Caco-2 (cell line): ENCODE measurements at regions of chr11 and their contacts with region 1.

Region 1: DNA sequence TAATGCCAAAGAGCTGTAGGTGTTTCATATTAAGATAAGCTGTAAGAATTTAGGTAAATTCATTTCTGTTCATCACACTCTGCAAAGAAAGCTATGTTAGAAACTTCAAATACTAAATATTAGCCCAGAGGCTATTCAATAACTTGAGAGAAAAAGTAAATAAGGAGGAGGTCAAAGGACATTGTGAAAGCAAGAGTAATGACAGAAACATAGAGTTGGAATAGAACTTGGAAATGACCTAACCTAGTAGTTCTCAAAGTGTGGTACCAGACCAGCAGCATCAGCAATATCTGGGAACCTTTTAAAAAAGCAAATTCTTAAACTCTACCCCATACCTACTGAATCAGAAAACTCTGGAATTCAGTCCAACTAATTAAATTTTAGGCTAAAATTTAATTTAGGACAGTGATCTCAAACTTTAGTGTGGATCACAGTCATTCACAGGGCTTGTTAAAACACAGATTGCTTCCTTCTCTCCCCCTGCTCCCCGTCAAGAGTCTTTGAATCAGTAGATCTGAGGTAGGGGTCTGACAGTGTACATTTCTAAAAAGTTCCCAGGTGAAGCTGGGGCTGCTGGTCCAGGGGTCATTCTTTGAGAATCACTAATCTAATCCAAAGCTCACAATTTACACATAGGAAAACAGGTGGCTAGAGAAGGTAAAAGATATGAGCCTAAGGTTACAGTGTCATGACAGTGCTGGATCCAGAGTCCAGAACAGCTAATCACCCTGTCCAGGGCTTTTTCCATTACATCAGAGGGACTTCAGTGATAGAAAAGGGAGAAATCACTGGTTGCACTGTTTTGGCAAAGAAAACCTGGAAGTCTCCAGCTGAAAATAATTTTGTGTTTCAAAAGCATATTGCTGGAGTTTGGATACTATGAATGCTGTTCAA is 241.1 kb downstream of the SOX6 start:
- DNase-seq: peak; percentile 51 to 55
- H3K4me3 ChIP-seq: no peak overlapping the region
- H3K4me3 Mint-ChIP-seq: peak overlapping the region; percentile 58
- H3K27ac Mint-ChIP-seq: peak overlapping the region; percentile 85
- H3K4me1 ChIP-seq: peaks cover 55% of the 10 kb centered on the region
- H3K4me1 Mint-ChIP-seq: peaks cover 47% of the 10 kb centered on the region
- H3K27me3 ChIP-seq: no peaks in the 10 kb centered on the region
- H3K27me3 Mint-ChIP-seq: no peaks in the 10 kb centered on the region
- CTCF ChIP-seq: no peak

Region 2: DNA sequence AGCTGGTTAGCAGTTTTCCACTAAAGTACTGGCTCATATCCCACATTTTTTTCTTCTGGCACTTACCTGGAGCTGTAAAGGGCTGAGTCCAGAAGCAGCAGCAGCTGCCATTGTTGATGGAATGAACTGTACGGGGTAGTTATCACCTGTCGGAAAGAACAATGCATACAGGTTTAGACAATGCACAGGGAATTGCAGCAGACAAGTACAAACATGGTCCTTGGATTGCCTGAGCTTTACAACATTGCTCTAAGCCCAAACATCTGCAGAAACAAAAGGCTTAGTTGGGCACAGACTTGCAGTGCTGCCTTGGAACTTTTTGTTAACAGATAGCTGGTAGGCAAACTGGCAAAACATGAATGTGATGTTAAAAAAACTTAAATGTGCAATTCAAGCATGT is 17.7 kb before region 1 on chr11:
- CTCF ChIA-PET with region 1: interaction called, 3 read pairs
- POLR2A ChIA-PET with region 1: no interaction called
- intact Hi-C with region 1: loop called (anchors 2 kb)
- DNase-seq: peak; percentile 60 to 64
- H3K4me3 ChIP-seq: no peak overlapping the region
- H3K4me3 Mint-ChIP-seq: no peak overlapping the region
- H3K27ac Mint-ChIP-seq: peak overlapping the region; percentile 64
- H3K4me1 ChIP-seq: peaks cover 43% of the 10 kb centered on the region
- H3K4me1 Mint-ChIP-seq: peaks cover 40% of the 10 kb centered on the region
- H3K27me3 ChIP-seq: no peaks in the 10 kb centered on the region
- H3K27me3 Mint-ChIP-seq: no peaks in the 10 kb centered on the region
- CTCF ChIP-seq: no peak

Region 3: DNA sequence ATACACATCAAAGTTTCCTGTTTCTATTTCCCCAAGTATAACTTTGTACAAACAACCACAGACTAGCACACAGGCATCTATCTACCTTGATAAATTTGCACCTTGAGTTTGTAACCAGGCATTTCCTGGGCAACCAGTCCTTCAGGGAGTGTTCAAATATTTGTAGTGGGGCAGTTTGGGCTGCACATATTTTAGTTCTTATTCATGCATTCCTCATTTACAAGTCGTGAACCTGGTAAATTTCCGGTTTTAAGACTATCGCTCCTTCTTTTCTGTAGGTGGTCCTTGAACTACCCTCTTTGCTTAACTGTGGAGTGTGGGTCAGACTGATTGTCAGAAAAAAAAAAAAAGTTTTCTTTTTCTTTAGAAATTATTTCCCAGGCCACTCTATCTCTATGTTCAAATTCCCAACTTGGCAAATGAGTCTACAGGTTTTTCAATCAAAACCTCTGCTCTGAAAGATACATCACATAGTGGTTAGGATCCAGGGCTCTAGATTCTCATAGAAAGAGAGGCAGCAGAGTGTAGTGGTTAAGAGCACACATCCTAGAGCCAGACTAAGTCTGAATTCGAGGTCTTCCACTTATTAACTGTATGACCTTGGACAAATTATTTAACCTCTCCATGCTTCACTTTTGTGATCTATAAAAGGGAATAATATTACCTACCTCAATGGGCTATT is 39.6 kb after region 1 on chr11:
- CTCF ChIA-PET with region 1: no interaction called
- POLR2A ChIA-PET with region 1: no interaction called
- intact Hi-C with region 1: loop called (anchors 2 kb)
- DNase-seq: peak; percentile 70 to 72
- H3K4me3 ChIP-seq: no peak overlapping the region
- H3K4me3 Mint-ChIP-seq: peak overlapping the region; percentile 24
- H3K27ac Mint-ChIP-seq: peak overlapping the region; percentile 86
- H3K4me1 ChIP-seq: peaks cover 51% of the 10 kb centered on the region
- H3K4me1 Mint-ChIP-seq: peaks cover 10% of the 10 kb centered on the region
- H3K27me3 ChIP-seq: no peaks in the 10 kb centered on the region
- H3K27me3 Mint-ChIP-seq: no peaks in the 10 kb centered on the region
- CTCF ChIP-seq: no peak

Region 4: DNA sequence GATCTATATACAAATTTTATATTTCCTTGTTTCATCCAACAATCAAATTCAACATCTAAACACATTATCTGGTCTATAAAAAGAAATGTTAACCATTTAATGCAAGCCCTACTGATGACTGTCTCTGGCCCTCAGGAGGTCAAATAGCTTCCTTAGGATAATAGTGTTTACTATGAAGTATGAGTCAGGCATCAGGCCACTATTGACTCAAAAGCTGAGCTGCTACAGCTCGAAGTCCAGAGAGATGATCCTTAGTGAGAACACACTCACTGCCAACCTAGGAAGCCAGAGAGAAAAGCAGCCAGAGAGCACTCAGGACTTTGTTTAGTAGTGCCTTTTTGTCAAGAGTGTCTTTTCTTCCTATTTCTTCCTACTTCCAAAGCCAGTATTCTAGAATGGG is 69.4 kb after region 1 on chr11:
- CTCF ChIA-PET with region 1: no interaction called
- POLR2A ChIA-PET with region 1: no interaction called
- intact Hi-C with region 1: loop called (anchors 2 kb)
- DNase-seq: peak; percentile 61 to 70
- H3K4me3 ChIP-seq: no peak overlapping the region
- H3K4me3 Mint-ChIP-seq: peak overlapping the region; percentile 26
- H3K27ac Mint-ChIP-seq: peak overlapping the region; percentile 32
- H3K4me1 ChIP-seq: peaks cover 30% of the 10 kb centered on the region
- H3K4me1 Mint-ChIP-seq: peaks cover 25% of the 10 kb centered on the region
- H3K27me3 ChIP-seq: no peaks in the 10 kb centered on the region
- H3K27me3 Mint-ChIP-seq: no peaks in the 10 kb centered on the region
- CTCF ChIP-seq: no peak